Psoas muscle (tissue), 8 donors: ENCODE measurements at regions of chr21 and their contacts with region 1.

Region 1: GRCh38 chr21:46228345-46229051 is at the start of gene LSS:
- DNase-seq: peak; percentile 99 to 100
- ATAC-seq: peak; percentile 92 to 95 (median 94)
- H3K4me3 ChIP-seq: peak within 1 kb of the TSS; percentile 99
- H3K27ac ChIP-seq: peak within 1 kb of the TSS; percentile 89
- H3K4me1 ChIP-seq: peaks cover 26% of the 10 kb centered on the region
- H3K27me3 ChIP-seq: no peaks in the 10 kb centered on the region
- CTCF ChIP-seq: no peak
- total RNA-seq, gene LSS: 24.8 to 31.5 (median 30.4) TPM

Region 2: GRCh38 chr21:45973659-45974072 is 254.8 kb before region 1 on chr21:
- intact Hi-C with region 1: loop called in 1 of 2 experiments (anchors 5 kb)
- DNase-seq: peak; percentile 84 to 88
- ATAC-seq: peak; percentile 34 to 61 (median 52)
- H3K4me3 ChIP-seq: peak overlapping the region; percentile 68
- H3K27ac ChIP-seq: peak overlapping the region; percentile 72
- H3K4me1 ChIP-seq: peaks cover 17% of the 10 kb centered on the region
- H3K27me3 ChIP-seq: peaks cover 0 to 40% (median 12%) of the 10 kb centered on the region in 3 donors
- CTCF ChIP-seq: peak; percentile 60

Region 3: GRCh38 chr21:46144464-46145070 is 83.9 kb before region 1 on chr21:
- intact Hi-C with region 1: loop called in 1 of 2 experiments (anchors 5 kb)
- DNase-seq: peak in 1 of 2 donors; percentile 39
- ATAC-seq: no peak
- H3K4me3 ChIP-seq: no peak overlapping the region
- H3K27ac ChIP-seq: no peak overlapping the region
- H3K4me1 ChIP-seq: no peaks in the 10 kb centered on the region
- H3K27me3 ChIP-seq: no peaks in the 10 kb centered on the region
- CTCF ChIP-seq: no peak

Region 4: GRCh38 chr21:46184625-46185555 is 43.6 kb before region 1 on chr21:
- intact Hi-C with region 1: loop called in 1 of 2 experiments (anchors 5 kb)
- DNase-seq: peak; percentile 86 to 89
- ATAC-seq: peak; percentile 64 to 72 (median 66)
- H3K4me3 ChIP-seq: peak overlapping the region; percentile 74
- H3K27ac ChIP-seq: peak overlapping the region; percentile 80
- H3K4me1 ChIP-seq: peaks cover 20% of the 10 kb centered on the region
- H3K27me3 ChIP-seq: peaks cover 0 to 1% (median 0%) of the 10 kb centered on the region in 3 donors
- CTCF ChIP-seq: no peak

Region 5: GRCh38 chr21:46392921-46393320 is 164.4 kb after region 1 on chr21:
- intact Hi-C with region 1: loop called in 1 of 2 experiments (anchors 10 kb)
- DNase-seq: peak; percentile 78 to 83
- ATAC-seq: peak; percentile 18 to 44 (median 32)
- H3K4me3 ChIP-seq: no peak overlapping the region
- H3K27ac ChIP-seq: peak overlapping the region; percentile 92
- H3K4me1 ChIP-seq: peaks cover 34% of the 10 kb centered on the region
- H3K27me3 ChIP-seq: no peaks in the 10 kb centered on the region
- CTCF ChIP-seq: no peak